Dorsolateral prefrontal cortex (tissue), 120 donors: ENCODE measurements at regions of chr7 and their contacts with region 1.

Region 1: DNA sequence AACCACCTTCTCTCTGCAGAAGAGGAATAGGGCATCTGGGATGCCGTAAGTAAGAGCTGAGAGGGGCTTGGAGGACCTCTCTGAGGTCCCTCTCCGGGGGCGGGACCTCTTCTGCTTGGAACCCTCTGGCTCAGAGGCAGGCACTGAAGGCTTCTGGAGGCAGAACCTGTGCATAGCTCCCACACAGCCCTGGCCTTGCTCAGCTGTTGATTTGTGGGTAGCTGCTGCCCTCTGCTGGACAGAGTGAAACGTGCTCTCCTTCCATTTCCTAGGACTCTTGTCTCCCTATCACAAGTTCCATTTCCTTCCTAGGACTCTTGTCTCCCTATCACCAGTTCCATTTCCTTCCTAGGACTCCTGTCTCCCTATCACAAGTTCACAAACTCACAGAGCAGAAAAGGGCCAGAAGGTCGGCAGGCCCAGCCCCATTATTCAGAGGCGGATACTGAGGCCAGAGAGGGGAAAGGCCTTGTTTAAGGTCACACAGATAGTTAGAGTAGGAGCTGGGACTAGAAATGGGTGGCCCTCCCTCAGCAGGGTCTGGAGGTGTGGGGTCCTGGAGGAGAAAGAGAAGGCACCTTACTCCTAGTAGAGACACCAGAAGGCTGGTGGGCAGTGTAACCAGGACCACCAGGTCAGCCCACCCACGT is 30.3 kb upstream of the GARS1 start:
- DNase-seq: peak; percentile 77 to 93 (median 90)
- H3K4me3 ChIP-seq: no peak overlapping the region
- H3K27ac ChIP-seq: peak overlapping the region in 31 of 59 donors; percentile 1 to 79 (median 36)
- H3K27me3 ChIP-seq: no peaks in the 10 kb centered on the region
- CTCF ChIP-seq: peak; percentile 54 to 97 (median 91)

Region 2: DNA sequence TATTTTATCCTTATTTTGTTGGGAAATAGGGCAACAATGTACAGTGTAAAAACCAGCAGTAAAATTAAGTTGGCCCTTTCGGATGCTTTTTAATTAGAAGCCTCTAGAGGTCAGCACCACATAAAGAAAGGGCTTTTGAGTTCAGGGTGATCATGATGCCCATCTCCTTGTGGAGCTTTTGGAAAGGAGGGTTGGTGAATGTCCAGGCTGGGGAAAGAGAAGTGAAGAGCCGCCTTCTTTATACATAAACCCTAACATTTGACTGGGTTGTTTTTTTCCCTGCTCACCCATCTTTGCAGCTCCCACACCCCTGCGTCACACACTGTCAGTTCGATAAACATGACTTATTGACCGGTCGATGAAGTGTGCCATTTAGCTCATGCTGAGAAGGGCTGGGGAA is 399.8 kb before region 1 on chr7:
- intact Hi-C with region 1: loop called (anchors 5 to 10 kb)
- DNase-seq: peak in 1 of 10 donors; percentile 46
- H3K4me3 ChIP-seq: peak overlapping the region in 4 of 59 donors; percentile 2 to 48 (median 34)
- H3K27ac ChIP-seq: peak overlapping the region in 58 of 59 donors; percentile 61 to 99 (median 94)
- H3K27me3 ChIP-seq: no peaks in the 10 kb centered on the region
- CTCF ChIP-seq: peak; percentile 41 to 92 (median 72)

Region 3: DNA sequence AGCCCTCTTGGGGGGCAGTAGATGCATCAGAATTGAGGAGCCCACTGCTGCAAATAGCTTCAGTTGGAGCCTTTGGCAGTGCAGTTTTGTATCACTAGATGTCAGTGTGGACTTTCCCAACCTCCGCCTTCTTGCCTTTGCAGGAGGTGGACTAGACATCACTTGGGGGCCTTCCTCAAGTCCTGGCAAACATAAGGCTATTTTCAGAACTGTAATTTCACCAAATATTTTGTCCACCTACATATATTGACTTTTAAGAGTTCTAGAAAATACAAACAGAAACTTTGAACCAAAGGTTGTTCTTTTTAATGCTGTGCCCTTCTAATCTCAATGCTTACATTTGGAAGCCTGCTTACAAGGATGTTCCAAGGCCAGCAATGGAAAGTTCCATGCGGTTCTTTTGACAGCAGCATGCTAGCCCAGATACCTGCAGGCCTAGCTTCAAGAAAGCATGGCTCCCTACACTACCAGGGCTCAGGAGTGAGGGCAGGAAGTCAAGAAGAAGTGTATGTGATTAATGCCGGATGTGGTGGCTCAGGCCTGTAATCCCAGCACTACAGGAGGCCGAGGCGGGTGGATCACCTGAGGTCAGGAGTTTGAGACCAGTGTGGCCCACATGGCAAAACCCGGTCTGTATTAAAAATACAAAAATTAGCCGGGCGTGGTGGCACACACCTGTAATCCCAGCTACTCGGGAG is 288.0 kb before region 1 on chr7:
- intact Hi-C with region 1: loop called (anchors 1 to 5 kb)
- DNase-seq: peak in 7 of 10 donors; percentile 34 to 70 (median 52)
- H3K4me3 ChIP-seq: no peak overlapping the region
- H3K27ac ChIP-seq: peak overlapping the region in 20 of 59 donors; percentile 0 to 69 (median 31)
- H3K27me3 ChIP-seq: no peaks in the 10 kb centered on the region
- CTCF ChIP-seq: peak in 55 of 56 donors; percentile 47 to 87 (median 74)

Region 4: DNA sequence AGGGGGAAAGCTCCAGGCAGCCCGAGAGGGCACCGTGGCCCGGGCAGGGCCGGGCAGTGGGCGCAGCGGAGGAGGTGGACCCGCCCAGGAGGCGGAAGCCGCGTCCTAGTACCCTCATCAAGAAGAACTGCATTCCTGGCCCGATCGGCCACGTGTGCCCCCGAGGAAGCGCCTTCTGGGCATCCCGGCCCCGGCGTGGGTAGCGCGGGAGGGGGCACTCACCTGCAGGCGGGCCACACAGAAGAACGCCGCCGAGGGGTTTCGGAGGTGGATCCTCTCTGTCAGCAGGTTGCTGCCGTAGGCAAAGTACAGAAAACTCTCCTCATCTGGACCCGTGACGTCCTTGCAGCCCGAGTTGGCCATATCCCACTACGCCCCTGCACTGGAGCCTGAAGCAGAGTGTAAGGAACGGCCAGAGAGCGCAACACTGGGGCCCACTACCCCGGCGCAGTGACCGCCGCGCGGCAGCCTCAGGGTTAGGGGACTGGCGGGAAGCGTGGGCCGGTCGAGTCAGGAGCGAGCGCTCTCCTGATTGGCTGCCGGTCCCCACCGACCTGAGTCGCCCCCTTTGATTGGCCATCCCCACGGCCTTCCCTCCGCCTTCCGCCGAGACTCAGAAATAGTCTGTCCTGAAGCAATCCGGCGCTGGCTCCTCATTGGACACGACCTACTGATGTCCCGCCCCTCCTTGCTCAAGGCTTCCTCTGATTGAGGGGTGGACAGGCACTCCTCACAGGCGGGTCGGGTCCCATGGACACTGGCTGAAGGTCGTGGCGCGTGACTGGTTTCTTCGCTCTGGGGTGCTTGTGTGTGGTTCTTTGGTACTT is 59.8 kb before region 1 on chr7 and contains the start of gene GGCT:
- intact Hi-C with region 1: loop called (anchors 5 kb)
- DNase-seq: peak; percentile 99 to 100 (median 100)
- H3K4me3 ChIP-seq: peak within 1 kb of the TSS; percentile 64 to 99 (median 91)
- H3K27ac ChIP-seq: peak within 1 kb of the TSS in 56 of 59 donors; percentile 1 to 94 (median 79)
- H3K27me3 ChIP-seq: no peaks in the 10 kb centered on the region
- CTCF ChIP-seq: peak in 23 of 56 donors; percentile 3 to 52 (median 27)
- total RNA-seq, gene GGCT: 14.1 to 56.5 (median 30.5) TPM

Region 5: GRCh38 chr7:30548762-30549344 is 15.5 kb before region 1 on chr7:
- intact Hi-C with region 1: loop called in 1 of 2 experiments (anchors 2 kb)
- DNase-seq: peak; percentile 53 to 89 (median 78)
- H3K4me3 ChIP-seq: peak overlapping the region in 10 of 59 donors; percentile 3 to 36 (median 12)
- H3K27ac ChIP-seq: peak overlapping the region in 57 of 59 donors; percentile 5 to 88 (median 73)
- H3K27me3 ChIP-seq: no peaks in the 10 kb centered on the region
- CTCF ChIP-seq: peak; percentile 75 to 98 (median 92)

Region 6: GRCh38 chr7:30740424-30741181 is 176.2 kb after region 1 on chr7:
- intact Hi-C with region 1: loop called in 1 of 2 experiments (anchors 10 kb)
- DNase-seq: peak in 9 of 10 donors; percentile 68 to 86 (median 73)
- H3K4me3 ChIP-seq: no peak overlapping the region
- H3K27ac ChIP-seq: no peak overlapping the region
- H3K27me3 ChIP-seq: no peaks in the 10 kb centered on the region
- CTCF ChIP-seq: peak; percentile 75 to 99 (median 95)